ENCODE measurements at regions of chr2 and their contacts with region 1.

Region 1: DNA sequence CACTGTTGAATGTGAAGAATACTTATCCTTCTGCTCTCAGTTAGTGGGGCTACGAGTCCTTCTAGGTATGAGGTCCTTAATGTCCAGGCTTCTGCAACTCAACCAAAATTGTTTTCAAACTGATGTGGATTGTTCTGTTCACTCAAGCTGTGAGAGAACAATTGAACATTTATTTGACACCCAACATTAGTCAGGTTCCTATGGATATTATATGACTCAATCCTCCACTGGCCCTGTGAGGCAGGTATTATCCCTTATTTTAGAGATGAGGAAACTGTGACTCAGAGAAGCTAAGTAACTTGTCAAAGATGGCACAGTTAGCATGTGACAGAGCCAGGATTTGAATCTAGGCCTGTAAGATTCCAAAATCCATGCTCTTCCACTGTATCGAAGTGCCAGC is 1.2 kb upstream of the LYG2 start:
- DNase-seq: peak; percentile 83
- ATAC-seq: peak; percentile 94
- H3K4me3 ChIP-seq: no peak overlapping the region
- H3K27ac ChIP-seq: peak overlapping the region; percentile 43
- H3K4me1 ChIP-seq: peaks cover 14% of the 10 kb centered on the region
- H3K27me3 ChIP-seq: no peaks in the 10 kb centered on the region
- CTCF ChIP-seq: no peak

Region 2: DNA sequence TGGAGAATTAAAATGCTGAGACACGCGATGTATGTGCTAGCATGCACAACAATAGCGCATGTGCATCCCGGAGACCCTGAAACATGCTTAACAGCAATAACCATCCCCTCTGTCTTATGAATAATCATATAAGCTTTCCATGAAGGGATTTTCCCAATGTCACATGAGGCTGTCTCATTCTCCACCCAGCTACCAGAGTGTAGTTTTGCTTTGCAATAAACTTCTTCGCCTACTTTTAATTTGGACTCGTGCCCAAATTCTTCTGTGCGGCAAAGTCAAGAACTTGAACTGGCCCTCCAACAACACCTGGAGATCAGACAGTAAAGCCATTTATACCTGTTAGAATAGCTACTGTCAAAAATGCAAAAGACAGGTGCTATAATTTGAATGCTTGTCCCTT is 28.8 kb after region 1 on chr2:
- CTCF ChIA-PET with region 1: no interaction called
- POLR2A ChIA-PET with region 1: no interaction called
- intact Hi-C with region 1: loop called (anchors 1 kb)
- DNase-seq: no peak
- ATAC-seq: no peak
- H3K4me3 ChIP-seq: no peak overlapping the region
- H3K27ac ChIP-seq: no peak overlapping the region
- H3K4me1 ChIP-seq: no peaks in the 10 kb centered on the region
- H3K27me3 ChIP-seq: no peaks in the 10 kb centered on the region
- CTCF ChIP-seq: no peak

Measured in PC-3 (cell line).